RWPE1 (cell line): ENCODE measurements at regions of chrX and their contacts with region 1.

Region 1: GRCh38 chrX:38941675-38942074 is 140.4 kb downstream of the MID1IP1 start:
- DNase-seq: no peak
- H3K27ac ChIP-seq: no peak overlapping the region
- CTCF ChIP-seq: no peak

Region 2: GRCh38 chrX:38538134-38538533 is 403.5 kb before region 1 on chrX:
- CTCF ChIA-PET with region 1: no interaction called
- POLR2A ChIA-PET with region 1: interaction called, 12 read pairs
- DNase-seq: no peak
- H3K27ac ChIP-seq: no peak overlapping the region
- CTCF ChIP-seq: no peak

Region 3: DNA sequence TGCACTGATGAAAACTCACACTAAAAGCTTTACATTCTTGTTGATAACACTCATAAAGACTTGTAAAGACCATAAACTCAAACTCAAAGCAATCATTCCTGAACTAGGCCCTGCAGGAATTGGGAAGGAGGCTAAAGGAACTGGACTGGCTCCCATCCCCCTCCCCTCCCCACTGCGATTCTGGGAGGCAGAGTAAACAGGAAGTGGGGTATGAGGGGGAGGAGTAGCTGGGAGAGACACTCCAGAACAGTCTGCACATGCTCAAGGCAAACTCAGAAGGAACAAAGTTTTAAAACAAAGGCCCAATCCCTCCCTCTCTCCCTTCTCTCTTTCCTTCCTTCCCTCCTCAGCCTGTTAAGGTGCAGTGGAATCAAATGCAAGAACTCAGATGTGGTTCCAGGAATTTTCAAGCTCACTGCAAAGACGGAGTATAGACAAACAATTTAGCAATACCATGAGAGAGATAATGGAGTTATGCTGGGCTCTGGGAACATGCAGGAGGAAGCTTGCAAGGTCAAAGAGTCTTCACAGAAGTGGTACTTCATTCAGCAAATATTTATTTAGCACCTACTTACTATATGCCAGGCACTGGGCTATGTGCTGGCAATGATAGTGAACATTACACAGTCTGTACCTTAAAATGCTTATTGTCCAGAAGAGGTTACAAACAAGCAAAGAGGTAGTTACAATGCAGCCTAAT is 124.5 kb before region 1 on chrX:
- CTCF ChIA-PET with region 1: no interaction called
- POLR2A ChIA-PET with region 1: no interaction called
- DNase-seq: no peak
- H3K27ac ChIP-seq: no peak overlapping the region
- CTCF ChIP-seq: no peak